CD4-positive, alpha-beta T cell (primary cell): ENCODE measurements at regions of chr5 and their contacts with region 1.

Region 1: DNA sequence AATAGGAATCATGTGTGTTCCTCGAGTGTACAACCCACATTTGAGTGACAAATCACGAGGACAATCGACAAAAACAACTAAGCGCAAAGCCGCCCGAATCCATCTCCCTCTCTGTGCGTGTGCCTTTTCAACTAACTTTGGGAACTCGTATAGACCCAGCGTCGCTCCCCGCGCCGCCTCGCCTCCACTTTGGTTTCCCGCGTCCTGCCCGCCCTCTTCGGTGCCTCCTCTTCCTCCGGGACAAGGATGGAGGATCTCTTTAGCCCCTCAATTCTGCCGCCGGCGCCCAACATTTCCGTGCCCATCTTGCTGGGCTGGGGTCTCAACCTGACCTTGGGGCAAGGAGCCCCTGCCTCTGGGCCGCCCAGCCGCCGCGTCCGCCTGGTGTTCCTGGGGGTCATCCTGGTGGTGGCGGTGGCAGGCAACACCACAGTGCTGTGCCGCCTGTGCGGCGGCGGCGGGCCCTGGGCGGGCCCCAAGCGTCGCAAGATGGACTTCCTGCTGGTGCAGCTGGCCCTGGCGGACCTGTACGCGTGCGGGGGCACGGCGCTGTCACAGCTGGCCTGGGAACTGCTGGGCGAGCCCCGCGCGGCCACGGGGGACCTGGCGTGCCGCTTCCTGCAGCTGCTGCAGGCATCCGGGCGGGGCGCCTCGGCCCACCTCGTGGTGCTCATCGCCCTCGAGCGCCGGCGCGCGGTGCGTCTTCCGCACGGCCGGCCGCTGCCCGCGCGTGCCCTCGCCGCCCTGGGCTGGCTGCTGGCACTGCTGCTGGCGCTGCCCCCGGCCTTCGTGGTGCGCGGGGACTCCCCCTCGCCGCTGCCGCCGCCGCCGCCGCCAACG is at the start of gene GPR150:
- DNase-seq: peak; percentile 33 to 86 (median 58)
- ATAC-seq: peak; percentile 60
- H3K4me3 ChIP-seq: peak within 1 kb of the TSS; percentile 83
- H3K4me3 Mint-ChIP-seq: peak within 1 kb of the TSS; percentile 95
- H3K27ac ChIP-seq: peak within 1 kb of the TSS in 1 of 2 donors; percentile 37
- H3K27ac Mint-ChIP-seq: peak within 1 kb of the TSS; percentile 69
- H3K4me1 ChIP-seq: peaks cover 48% of the 10 kb centered on the region
- H3K4me1 Mint-ChIP-seq: peaks cover 77% of the 10 kb centered on the region
- H3K27me3 ChIP-seq: no peaks in the 10 kb centered on the region
- H3K27me3 Mint-ChIP-seq: no peaks in the 10 kb centered on the region
- CTCF ChIP-seq: no peak
- total RNA-seq, gene GPR150: 0.60 to 0.75 TPM

Region 2: DNA sequence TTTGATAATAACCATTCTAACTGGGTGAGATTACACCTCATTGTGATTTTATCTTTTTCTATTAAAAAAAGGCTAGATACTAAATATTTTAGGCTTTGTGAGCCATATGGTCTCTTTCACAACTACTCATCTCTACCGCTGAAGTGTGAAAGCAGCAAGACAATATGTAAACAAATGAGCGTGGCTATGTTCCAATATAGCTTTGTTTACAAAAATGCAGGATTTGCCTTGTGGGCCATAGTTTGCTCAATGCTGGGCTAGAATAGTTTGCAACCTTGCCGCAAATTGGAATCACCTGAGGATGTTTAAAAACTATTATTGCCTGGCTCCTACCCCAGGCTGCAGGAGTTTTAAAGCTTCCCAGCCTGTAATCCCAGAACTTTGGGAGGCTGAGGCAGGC is 10.5 kb before region 1 on chr5:
- CTCF ChIA-PET with region 1: no interaction called
- POLR2A ChIA-PET with region 1: interaction called, 11 read pairs
- intact Hi-C with region 1: no loop called
- DNase-seq: no peak
- ATAC-seq: no peak
- H3K4me3 ChIP-seq: no peak overlapping the region
- H3K4me3 Mint-ChIP-seq: no peak overlapping the region
- H3K27ac ChIP-seq: no peak overlapping the region
- H3K27ac Mint-ChIP-seq: no peak overlapping the region
- H3K4me1 ChIP-seq: no peaks in the 10 kb centered on the region
- H3K4me1 Mint-ChIP-seq: peaks cover 7% of the 10 kb centered on the region
- H3K27me3 ChIP-seq: no peaks in the 10 kb centered on the region
- H3K27me3 Mint-ChIP-seq: no peaks in the 10 kb centered on the region
- CTCF ChIP-seq: no peak

Region 3: DNA sequence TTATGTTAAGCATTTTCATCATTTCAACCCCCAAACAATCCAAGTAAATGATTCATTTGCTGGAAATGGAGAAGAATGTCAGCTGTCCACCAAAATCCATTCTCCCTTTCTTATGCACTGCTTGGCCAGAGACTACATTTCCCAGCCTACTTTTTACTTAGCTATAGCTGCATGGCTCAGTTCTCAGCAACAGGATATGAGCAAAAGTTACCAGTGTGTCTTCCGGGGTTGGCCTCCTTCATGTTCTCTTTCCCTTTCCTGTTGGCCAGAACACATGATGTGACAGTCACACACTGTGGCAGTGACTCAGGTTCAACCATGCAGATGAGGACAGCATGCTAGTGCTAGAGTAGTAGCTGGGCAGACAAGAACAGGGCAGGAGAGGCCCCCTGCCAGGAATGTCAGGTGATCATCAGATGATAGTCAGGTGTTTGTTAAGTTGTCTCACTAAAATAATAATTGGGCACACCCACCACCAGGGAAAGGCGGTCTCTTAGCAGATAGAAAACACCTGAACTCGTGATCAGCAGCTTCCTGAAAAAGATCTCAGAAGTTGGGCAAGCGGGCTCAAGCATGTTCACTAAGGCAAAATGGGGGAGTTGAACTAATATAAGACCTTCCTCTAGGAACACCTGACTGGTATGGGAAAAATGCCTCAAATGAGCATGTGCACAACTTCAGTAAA is 11.9 kb after region 1 on chr5:
- CTCF ChIA-PET with region 1: interaction called, 5 read pairs
- POLR2A ChIA-PET with region 1: interaction called, 73 read pairs
- intact Hi-C with region 1: loop called in 1 of 2 experiments (anchors 1 kb)
- DNase-seq: peak; percentile 44 to 90 (median 62)
- ATAC-seq: peak; percentile 98
- H3K4me3 ChIP-seq: no peak overlapping the region
- H3K4me3 Mint-ChIP-seq: peak overlapping the region; percentile 9
- H3K27ac ChIP-seq: peak overlapping the region; percentile 16 to 80
- H3K27ac Mint-ChIP-seq: peak overlapping the region; percentile 89
- H3K4me1 ChIP-seq: peaks cover 19% of the 10 kb centered on the region
- H3K4me1 Mint-ChIP-seq: peaks cover 42% of the 10 kb centered on the region
- H3K27me3 ChIP-seq: no peaks in the 10 kb centered on the region
- H3K27me3 Mint-ChIP-seq: no peaks in the 10 kb centered on the region
- CTCF ChIP-seq: no peak